ENCODE measurements at regions of chrX and their contacts with region 1.

Region 1: DNA sequence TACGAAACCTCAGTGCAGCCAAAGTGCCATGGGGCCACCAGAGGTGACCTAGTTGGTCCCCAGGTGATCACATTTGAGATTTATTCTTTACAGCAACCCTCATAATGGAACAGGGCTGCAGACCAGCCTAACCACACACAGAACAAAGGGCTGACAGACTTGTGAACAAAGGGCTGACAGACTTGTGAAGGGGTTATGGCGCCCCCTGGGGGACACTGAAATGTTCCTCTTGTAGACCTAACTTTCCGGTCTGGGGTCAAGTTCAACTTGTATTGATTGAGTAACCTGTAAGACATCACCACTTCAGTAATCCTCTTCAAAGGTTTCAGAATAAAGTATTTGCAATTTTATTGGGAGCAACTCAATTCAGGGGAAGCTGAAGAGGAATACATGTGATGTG is 175.9 kb upstream of the RPS6KA3 start:
- DNase-seq: peak; percentile 64 to 87 (median 74)
- ATAC-seq: peak in 3 of 4 donors; percentile 77 to 78 (median 78)
- H3K4me3 ChIP-seq: no peak overlapping the region
- H3K27ac ChIP-seq: no peak overlapping the region
- H3K4me1 ChIP-seq: peaks cover 0 to 9% (median 0%) of the 10 kb centered on the region in 12 donors
- H3K27me3 ChIP-seq: peaks cover 0 to 13% (median 0%) of the 10 kb centered on the region in 9 donors
- CTCF ChIP-seq: peak; percentile 48 to 68 (median 62)
- POLR2A ChIP-seq: no peak

Region 2: DNA sequence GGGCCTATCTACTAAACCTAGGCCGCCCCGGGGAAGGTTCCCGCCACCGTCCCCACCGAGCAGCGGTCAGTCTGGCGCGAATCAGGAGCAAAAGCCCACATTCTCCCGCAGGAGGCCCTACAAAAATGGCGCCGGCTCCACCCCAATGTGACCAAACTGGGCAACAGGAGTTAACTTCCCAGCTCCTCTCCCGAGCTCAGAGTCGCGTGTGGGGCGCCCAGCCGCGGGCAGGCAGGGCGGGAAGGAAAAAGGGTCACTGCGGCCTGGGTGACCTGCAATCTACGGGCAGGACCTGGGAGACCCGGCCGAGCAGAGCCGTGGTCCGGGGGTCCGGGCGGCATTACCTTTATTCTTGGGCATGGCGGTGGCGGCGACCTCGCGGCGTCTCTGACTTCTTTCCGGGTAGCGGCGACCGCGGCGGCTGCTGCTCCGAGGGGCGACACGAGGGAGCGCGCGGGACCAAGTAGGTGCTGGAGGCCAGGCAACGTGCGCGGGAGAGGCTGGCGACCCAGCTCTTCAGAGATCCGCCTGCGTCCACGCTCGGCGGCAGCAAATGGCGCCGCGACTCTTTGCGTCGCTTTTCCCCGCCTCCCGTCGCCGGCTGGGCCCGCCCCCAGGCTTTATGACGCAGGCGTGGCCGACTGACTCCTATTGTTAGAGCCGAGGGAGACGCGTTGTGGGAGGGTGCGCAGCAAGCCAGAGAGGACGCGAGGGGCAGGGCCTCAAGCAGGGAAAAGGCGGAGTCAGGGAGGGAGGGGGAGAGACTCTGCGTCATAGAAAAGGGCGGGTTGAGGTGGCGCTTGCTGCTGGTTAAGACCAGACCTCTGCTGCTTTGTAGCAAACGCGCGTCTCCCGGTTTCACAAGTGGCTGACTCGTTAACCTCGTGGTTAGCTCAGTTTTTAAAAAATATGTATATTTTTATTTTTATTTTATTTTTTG is 301.0 kb before region 1 on chrX and contains the start of gene EIF1AX:
- intact Hi-C with region 1: loop called in 1 of 10 experiments (anchors 10 kb)
- DNase-seq: peak; percentile 95 to 99 (median 97)
- ATAC-seq: peak; percentile 99 to 100 (median 100)
- H3K4me3 ChIP-seq: peak within 1 kb of the TSS; percentile 52 to 95 (median 80)
- H3K27ac ChIP-seq: peak within 1 kb of the TSS; percentile 47 to 93 (median 88)
- H3K4me1 ChIP-seq: peaks cover 3 to 38% (median 15%) of the 10 kb centered on the region in 12 donors
- H3K27me3 ChIP-seq: peaks cover 0 to 7% (median 0%) of the 10 kb centered on the region in 9 donors
- CTCF ChIP-seq: no peak
- POLR2A ChIP-seq: peak; percentile 96
- total RNA-seq, gene EIF1AX: 39.6 to 162 (median 58.7) TPM

Region 3: GRCh38 chrX:20252381-20253231 is 190.0 kb before region 1 on chrX:
- intact Hi-C with region 1: loop called in 7 of 10 experiments (anchors 1 to 5 kb)
- DNase-seq: peak; percentile 25 to 57 (median 35)
- ATAC-seq: peak in 3 of 4 donors; percentile 33 to 46 (median 44)
- H3K4me3 ChIP-seq: no peak overlapping the region
- H3K27ac ChIP-seq: no peak overlapping the region
- H3K4me1 ChIP-seq: peaks cover 0 to 14% (median 0%) of the 10 kb centered on the region in 12 donors
- H3K27me3 ChIP-seq: no peaks in the 10 kb centered on the region
- CTCF ChIP-seq: peak; percentile 31 to 56 (median 44)
- POLR2A ChIP-seq: no peak

Measured in heart left ventricle (tissue), 16 donors.